ENCODE measurements at regions of chr3 and their contacts with region 1.

Region 1: GRCh38 chr3:184229394-184230080 is at the start of gene VWA5B2:
- DNase-seq: peak; percentile 73
- ATAC-seq: peak; percentile 96
- H3K4me3 Mint-ChIP-seq: peak within 1 kb of the TSS; percentile 54
- H3K27ac Mint-ChIP-seq: no peak within 1 kb of the TSS
- H3K4me1 Mint-ChIP-seq: peaks cover 11% of the 10 kb centered on the region
- H3K27me3 Mint-ChIP-seq: peaks cover 37% of the 10 kb centered on the region
- CTCF ChIP-seq: no peak
- total RNA-seq, gene VWA5B2: not detected

Region 2: GRCh38 chr3:183895296-183895695 is 334.2 kb before region 1 on chr3:
- CTCF ChIA-PET with region 1: interaction called, 10 read pairs
- POLR2A ChIA-PET with region 1: no interaction called
- intact Hi-C with region 1: no loop called
- DNase-seq: peak; percentile 37
- ATAC-seq: peak; percentile 94
- H3K4me3 Mint-ChIP-seq: no peak overlapping the region
- H3K27ac Mint-ChIP-seq: no peak overlapping the region
- H3K4me1 Mint-ChIP-seq: no peaks in the 10 kb centered on the region
- H3K27me3 Mint-ChIP-seq: peaks cover 6% of the 10 kb centered on the region
- CTCF ChIP-seq: peak; percentile 80

Region 3: GRCh38 chr3:184185461-184186308 is 43.9 kb before region 1 on chr3 and contains the start of gene ABCF3:
- CTCF ChIA-PET with region 1: interaction called, 15 read pairs
- POLR2A ChIA-PET with region 1: no interaction called
- intact Hi-C with region 1: no loop called
- DNase-seq: peak; percentile 99
- ATAC-seq: peak; percentile 96
- H3K4me3 Mint-ChIP-seq: peak within 1 kb of the TSS; percentile 94
- H3K27ac Mint-ChIP-seq: peak within 1 kb of the TSS; percentile 96
- H3K4me1 Mint-ChIP-seq: peaks cover 31% of the 10 kb centered on the region
- H3K27me3 Mint-ChIP-seq: no peaks in the 10 kb centered on the region
- CTCF ChIP-seq: no peak
- total RNA-seq, gene ABCF3: 61.3 to 68.7 TPM

Region 4: GRCh38 chr3:184209146-184209923 is 20.2 kb before region 1 on chr3:
- CTCF ChIA-PET with region 1: interaction called, 46 read pairs
- POLR2A ChIA-PET with region 1: no interaction called
- intact Hi-C with region 1: no loop called
- DNase-seq: no peak
- ATAC-seq: no peak
- H3K4me3 Mint-ChIP-seq: no peak overlapping the region
- H3K27ac Mint-ChIP-seq: no peak overlapping the region
- H3K4me1 Mint-ChIP-seq: no peaks in the 10 kb centered on the region
- H3K27me3 Mint-ChIP-seq: peaks cover 11% of the 10 kb centered on the region
- CTCF ChIP-seq: no peak

Region 5: GRCh38 chr3:184241447-184242296 is 12.1 kb after region 1 on chr3:
- CTCF ChIA-PET with region 1: interaction called, 30 read pairs
- POLR2A ChIA-PET with region 1: interaction called, 9 read pairs
- intact Hi-C with region 1: no loop called
- DNase-seq: peak; percentile 38
- ATAC-seq: peak; percentile 49
- H3K4me3 Mint-ChIP-seq: no peak overlapping the region
- H3K27ac Mint-ChIP-seq: no peak overlapping the region
- H3K4me1 Mint-ChIP-seq: peaks cover 4% of the 10 kb centered on the region
- H3K27me3 Mint-ChIP-seq: no peaks in the 10 kb centered on the region
- CTCF ChIP-seq: no peak

Region 6: GRCh38 chr3:184255291-184256039 is 25.9 kb after region 1 on chr3:
- CTCF ChIA-PET with region 1: interaction called, 67 read pairs
- POLR2A ChIA-PET with region 1: interaction called, 6 read pairs
- intact Hi-C with region 1: no loop called
- DNase-seq: peak; percentile 58
- ATAC-seq: peak; percentile 54
- H3K4me3 Mint-ChIP-seq: no peak overlapping the region
- H3K27ac Mint-ChIP-seq: peak overlapping the region; percentile 66
- H3K4me1 Mint-ChIP-seq: peaks cover 18% of the 10 kb centered on the region
- H3K27me3 Mint-ChIP-seq: peaks cover 8% of the 10 kb centered on the region
- CTCF ChIP-seq: no peak

Region 7: GRCh38 chr3:184272269-184272668 is 42.7 kb after region 1 on chr3:
- CTCF ChIA-PET with region 1: interaction called, 10 read pairs
- POLR2A ChIA-PET with region 1: no interaction called
- intact Hi-C with region 1: no loop called
- DNase-seq: no peak
- ATAC-seq: no peak
- H3K4me3 Mint-ChIP-seq: no peak overlapping the region
- H3K27ac Mint-ChIP-seq: no peak overlapping the region
- H3K4me1 Mint-ChIP-seq: peaks cover 5% of the 10 kb centered on the region
- H3K27me3 Mint-ChIP-seq: peaks cover 29% of the 10 kb centered on the region
- CTCF ChIP-seq: no peak

Measured in activated CD8-positive, alpha-beta T cell treated with anti-CD3 and anti-CD28 coated beads for 36 hours (primary cell).